Gastrocnemius medialis (tissue), 4 donors: ENCODE measurements at regions of chr17 and their contacts with region 1.

Region 1: DNA sequence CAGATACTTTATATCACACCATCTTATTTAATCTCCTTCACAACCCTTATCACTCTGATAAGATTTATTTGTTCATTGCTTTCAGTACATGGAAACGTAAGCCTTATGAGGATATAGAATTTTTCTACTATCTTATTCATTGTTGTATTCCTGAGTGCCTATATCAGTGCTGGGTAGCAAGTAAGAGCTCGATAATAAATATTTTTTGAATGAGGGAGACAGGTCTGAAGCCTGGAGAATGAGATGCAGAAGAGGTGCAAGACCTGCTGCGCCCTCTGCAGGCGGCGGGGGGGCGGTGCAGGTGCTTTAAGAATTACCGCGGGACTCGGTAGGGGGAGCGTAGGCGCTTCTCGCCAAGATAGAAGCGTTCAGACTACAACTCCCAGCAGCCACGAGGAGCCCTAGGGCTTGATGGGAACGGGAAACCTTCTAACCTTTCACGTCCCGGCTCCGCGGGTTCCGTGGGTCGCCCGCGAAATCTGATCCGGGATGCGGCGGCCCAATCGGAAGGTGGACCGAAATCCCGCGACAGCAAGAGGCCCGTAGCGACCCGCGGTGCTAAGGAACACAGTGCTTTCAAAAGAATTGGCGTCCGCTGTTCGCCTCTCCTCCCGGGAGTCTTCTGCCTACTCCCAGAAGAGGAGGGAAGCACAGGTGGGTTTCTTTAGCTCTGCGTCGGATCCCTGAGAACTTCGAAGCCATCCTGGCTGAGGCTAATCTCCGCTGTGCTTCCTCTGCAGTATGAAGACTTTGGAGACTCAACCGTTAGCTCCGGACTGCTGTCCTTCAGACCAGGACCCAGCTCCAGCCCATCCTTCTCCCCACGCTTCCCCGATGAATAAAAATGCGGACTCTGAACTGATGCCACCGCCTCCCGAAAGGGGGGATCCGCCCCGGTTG is at the start of gene WRAP53:
- DNase-seq: peak; percentile 98 to 99
- ATAC-seq: peak; percentile 86 to 88
- H3K4me3 ChIP-seq: peak within 1 kb of the TSS; percentile 80 to 96 (median 90)
- H3K27ac ChIP-seq: peak within 1 kb of the TSS; percentile 94 to 97 (median 94)
- H3K4me1 ChIP-seq: peaks cover 26 to 34% of the 10 kb centered on the region in 2 donors
- H3K27me3 ChIP-seq: no peaks in the 10 kb centered on the region
- CTCF ChIP-seq: peak; percentile 96 to 100 (median 98)
- POLR2A ChIP-seq: peak in 1 of 2 donors; percentile 36
- total RNA-seq, gene WRAP53: 2.6 to 5.8 (median 3.7) TPM

Region 2: GRCh38 chr17:7351665-7352501 is 336.3 kb before region 1 on chr17 and contains the start of gene KCTD11:
- in situ Hi-C with region 1: no loop called
- intact Hi-C with region 1: loop called (anchors 1 kb)
- DNase-seq: peak; percentile 84 to 91
- ATAC-seq: peak; percentile 70 to 81
- H3K4me3 ChIP-seq: peak within 1 kb of the TSS; percentile 71 to 100 (median 84)
- H3K27ac ChIP-seq: peak within 1 kb of the TSS; percentile 93 to 98 (median 96)
- H3K4me1 ChIP-seq: peaks cover 22 to 40% of the 10 kb centered on the region in 2 donors
- H3K27me3 ChIP-seq: no peaks in the 10 kb centered on the region
- CTCF ChIP-seq: peak in 3 of 5 experiments; percentile 58 to 74 (median 60)
- POLR2A ChIP-seq: peak; percentile 72 to 75
- total RNA-seq, gene KCTD11: 3.6 to 7.0 (median 4.6) TPM

Region 3: DNA sequence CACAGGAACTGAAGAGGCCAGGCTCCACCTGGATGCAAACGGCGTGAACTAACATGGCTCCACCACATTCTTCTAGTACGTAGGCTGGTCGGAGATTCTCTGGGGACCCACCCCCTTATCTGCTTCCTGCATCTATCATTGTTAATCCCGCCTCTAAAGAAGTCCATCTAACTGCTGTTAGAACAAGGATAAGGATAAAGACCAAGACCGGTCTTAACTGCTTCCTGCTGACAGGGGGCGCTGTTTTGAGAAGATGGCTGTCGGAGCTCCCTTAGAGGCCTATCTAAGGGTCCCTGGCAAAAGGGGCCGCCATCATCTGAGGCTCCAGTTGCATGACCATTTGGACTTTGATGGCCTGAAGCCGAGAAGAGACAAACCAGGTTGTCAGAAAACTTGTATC is 165.1 kb before region 1 on chr17:
- in situ Hi-C with region 1: loop called in 2 of 4 experiments (anchors 25 kb)
- intact Hi-C with region 1: no loop called
- DNase-seq: no peak
- ATAC-seq: no peak
- H3K4me3 ChIP-seq: no peak overlapping the region
- H3K27ac ChIP-seq: no peak overlapping the region
- H3K4me1 ChIP-seq: no peaks in the 10 kb centered on the region
- H3K27me3 ChIP-seq: no peaks in the 10 kb centered on the region
- CTCF ChIP-seq: peak in 2 of 5 experiments; percentile 39 to 47
- POLR2A ChIP-seq: no peak

Region 4: GRCh38 chr17:7614422-7615264 is 73.5 kb before region 1 on chr17 and contains the start of gene FXR2:
- in situ Hi-C with region 1: no loop called
- intact Hi-C with region 1: loop called (anchors 1 kb)
- DNase-seq: peak; percentile 100
- ATAC-seq: peak; percentile 93 to 94
- H3K4me3 ChIP-seq: peak within 1 kb of the TSS; percentile 71 to 95 (median 74)
- H3K27ac ChIP-seq: peak within 1 kb of the TSS; percentile 88 to 98 (median 91)
- H3K4me1 ChIP-seq: peaks cover 37 to 38% of the 10 kb centered on the region in 2 donors
- H3K27me3 ChIP-seq: no peaks in the 10 kb centered on the region
- CTCF ChIP-seq: peak; percentile 41 to 81 (median 65)
- POLR2A ChIP-seq: peak; percentile 97 to 99
- total RNA-seq, gene FXR2: 100 to 174 (median 140) TPM

Region 5: GRCh38 chr17:7632492-7632894 is 55.7 kb before region 1 on chr17:
- in situ Hi-C with region 1: loop called in 3 of 4 experiments (anchors 5 kb)
- intact Hi-C with region 1: loop called (anchors 1 kb)
- DNase-seq: peak in 1 of 2 donors; percentile 35
- ATAC-seq: no peak
- H3K4me3 ChIP-seq: no peak overlapping the region
- H3K27ac ChIP-seq: peak overlapping the region in 1 of 4 donors; percentile 22
- H3K4me1 ChIP-seq: peaks cover 0 to 2% of the 10 kb centered on the region in 2 donors
- H3K27me3 ChIP-seq: no peaks in the 10 kb centered on the region
- CTCF ChIP-seq: peak in 4 of 5 experiments; percentile 54 to 64 (median 56)
- POLR2A ChIP-seq: no peak

Region 6: GRCh38 chr17:7856883-7857723 is 168.9 kb after region 1 on chr17 and contains the start of gene NAA38:
- in situ Hi-C with region 1: no loop called
- intact Hi-C with region 1: loop called (anchors 1 kb)
- DNase-seq: peak; percentile 97 to 98
- ATAC-seq: peak; percentile 93 to 95
- H3K4me3 ChIP-seq: peak within 1 kb of the TSS; percentile 65 to 87 (median 80)
- H3K27ac ChIP-seq: peak within 1 kb of the TSS; percentile 91 to 99 (median 96)
- H3K4me1 ChIP-seq: peaks cover 26 to 34% of the 10 kb centered on the region in 2 donors
- H3K27me3 ChIP-seq: no peaks in the 10 kb centered on the region
- CTCF ChIP-seq: peak; percentile 4 to 72 (median 63)
- POLR2A ChIP-seq: peak in 1 of 2 donors; percentile 48
- total RNA-seq, gene NAA38: 57.4 to 133 (median 96.6) TPM